Thyroid gland (tissue), 4 donors: ENCODE measurements at regions of chr3 and their contacts with region 1.

Region 1: GRCh38 chr3:19946832-19947548 is at the start of gene RAB5A:
- DNase-seq: peak; percentile 99
- H3K4me3 ChIP-seq: peak within 1 kb of the TSS; percentile 73 to 95 (median 94)
- H3K27ac ChIP-seq: peak within 1 kb of the TSS; percentile 93 to 99 (median 98)
- H3K4me1 ChIP-seq: peaks cover 21 to 32% of the 10 kb centered on the region in 2 donors
- H3K27me3 ChIP-seq: no peaks in the 10 kb centered on the region
- CTCF ChIP-seq: peak in 1 of 6 experiments; percentile 28
- POLR2A ChIP-seq: peak in 1 of 2 donors; percentile 86
- total RNA-seq, gene RAB5A: 76.8 to 109 (median 85.5) TPM

Region 2: GRCh38 chr3:20039766-20040475 is 92.9 kb after region 1 on chr3 and contains the start of gene KAT2B:
- intact Hi-C with region 1: loop called (anchors 5 kb)
- DNase-seq: peak; percentile 86 to 87
- H3K4me3 ChIP-seq: peak within 1 kb of the TSS; percentile 35 to 73 (median 60)
- H3K27ac ChIP-seq: peak within 1 kb of the TSS; percentile 95 to 99 (median 96)
- H3K4me1 ChIP-seq: peaks cover 28 to 30% of the 10 kb centered on the region in 2 donors
- H3K27me3 ChIP-seq: no peaks in the 10 kb centered on the region
- CTCF ChIP-seq: peak; percentile 51 to 87 (median 61)
- POLR2A ChIP-seq: peak in 1 of 2 donors; percentile 78
- total RNA-seq, gene KAT2B: 57.2 to 122 (median 74.9) TPM

Region 3: DNA sequence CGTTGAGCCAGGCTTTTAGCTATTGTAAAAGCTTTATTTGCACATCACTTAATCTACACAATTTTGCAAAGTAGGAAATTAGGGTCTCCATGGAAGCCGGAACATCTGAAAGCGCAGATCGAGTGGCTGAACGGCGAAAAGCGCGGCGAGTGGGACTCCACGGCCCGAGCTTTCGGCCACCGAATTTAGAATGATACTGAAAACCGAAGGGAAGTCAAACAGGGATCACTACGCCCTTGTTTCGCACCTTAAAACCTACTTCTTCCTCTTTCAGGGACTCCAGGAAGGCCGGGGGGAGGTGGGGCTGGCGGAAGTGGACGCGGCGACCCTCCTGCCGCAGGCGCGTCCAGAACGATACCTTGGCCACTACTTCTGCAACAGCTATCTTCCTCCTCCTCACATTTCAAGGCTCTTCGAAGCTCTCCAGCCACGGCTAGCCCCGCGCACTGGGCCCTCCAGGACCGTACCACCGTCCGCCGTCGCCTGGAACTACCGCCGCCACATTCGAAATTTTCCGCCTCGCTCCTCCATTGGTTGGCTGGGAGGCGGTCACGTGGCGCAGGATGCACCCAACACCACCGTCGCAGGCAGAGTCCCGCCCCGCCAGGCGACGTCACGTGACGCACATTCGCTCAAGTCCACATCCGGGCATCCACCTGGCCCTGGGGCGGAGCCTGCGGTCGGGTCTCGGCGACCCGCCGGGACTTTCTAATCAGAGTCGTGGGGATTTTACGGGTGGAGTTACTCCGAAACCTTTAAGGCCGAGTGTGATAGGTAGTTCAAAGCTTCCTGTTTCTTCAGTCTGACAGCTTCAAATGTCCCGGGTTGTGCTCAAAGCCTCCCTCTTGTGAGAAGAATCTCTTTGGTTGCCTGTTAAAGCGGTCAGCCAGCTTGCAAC is 239.0 kb after region 1 on chr3 and contains the start of gene SGO1:
- intact Hi-C with region 1: loop called (anchors 5 kb)
- DNase-seq: peak; percentile 100
- H3K4me3 ChIP-seq: peak within 1 kb of the TSS; percentile 32 to 85 (median 54)
- H3K27ac ChIP-seq: peak within 1 kb of the TSS; percentile 92
- H3K4me1 ChIP-seq: peaks cover 8 to 16% of the 10 kb centered on the region in 2 donors
- H3K27me3 ChIP-seq: no peaks in the 10 kb centered on the region
- CTCF ChIP-seq: peak in 2 of 6 experiments; percentile 19 to 25
- POLR2A ChIP-seq: peak in 1 of 2 donors; percentile 88
- total RNA-seq, gene SGO1: 0.33 to 0.67 (median 0.46) TPM in 3 of 4 donors, not detected in the other